Naive thymus-derived CD4-positive, alpha-beta T cell (primary cell): ENCODE measurements at regions of chr17 and their contacts with region 1.

Region 1: DNA sequence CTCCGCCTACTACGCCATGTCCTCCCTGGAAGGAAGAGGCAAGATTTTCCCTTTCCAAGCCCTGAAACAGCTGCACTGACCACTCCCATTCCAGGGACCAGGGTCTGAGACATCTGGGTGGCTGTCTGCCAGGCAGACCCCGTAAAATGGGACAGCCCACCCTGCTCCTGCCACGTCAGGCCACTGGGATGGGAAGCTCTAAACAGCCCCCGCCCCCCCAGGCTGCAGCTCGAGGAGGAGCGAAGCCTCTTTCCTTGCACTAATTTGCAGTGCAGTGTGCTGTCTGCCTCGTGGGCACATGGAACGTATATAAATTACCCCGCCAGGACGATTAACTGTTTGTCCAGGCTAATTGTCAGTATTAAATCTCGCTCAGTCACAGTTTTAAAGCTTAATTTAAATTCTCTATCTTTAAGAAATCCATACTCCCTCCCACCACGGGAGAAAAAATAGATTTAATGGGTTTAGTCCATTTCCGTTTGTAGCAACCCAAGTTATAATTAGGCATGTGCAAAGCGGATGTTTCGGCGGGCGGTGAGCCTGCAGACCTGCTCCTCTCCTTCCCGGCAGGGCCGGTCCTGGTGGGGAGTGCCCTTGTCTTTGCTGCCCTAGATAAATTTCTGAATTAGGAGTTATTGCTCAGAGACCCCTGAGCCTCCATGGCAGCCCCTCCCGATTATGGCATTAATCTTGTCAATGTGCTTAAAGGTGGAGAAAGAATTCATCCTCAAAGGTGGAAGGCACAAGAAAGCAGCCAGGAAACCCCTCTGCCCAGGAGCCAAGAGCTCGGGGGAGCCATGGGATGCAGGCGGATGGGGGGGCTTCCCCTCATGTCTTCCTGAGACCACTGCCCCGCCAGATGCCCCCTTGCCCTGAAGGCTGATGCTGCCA is 268.0 kb upstream of the TNRC6C start:
- DNase-seq: peak in 5 of 9 donors; percentile 12 to 28 (median 23)
- ATAC-seq: no peak
- H3K4me3 ChIP-seq: peak overlapping the region; percentile 7
- H3K4me3 Mint-ChIP-seq: peak overlapping the region; percentile 23 to 81 (median 72)
- H3K27ac ChIP-seq: peak overlapping the region; percentile 8
- H3K27ac Mint-ChIP-seq: peak overlapping the region in 3 of 9 donors; percentile 17 to 56 (median 39)
- H3K4me1 ChIP-seq: peaks cover 5 to 9% of the 10 kb centered on the region in 2 donors
- H3K4me1 Mint-ChIP-seq: peaks cover 11 to 27% (median 24%) of the 10 kb centered on the region in 7 donors
- H3K27me3 ChIP-seq: no peaks in the 10 kb centered on the region
- H3K27me3 Mint-ChIP-seq: peaks cover 0 to 20% (median 7%) of the 10 kb centered on the region in 5 donors

Region 2: DNA sequence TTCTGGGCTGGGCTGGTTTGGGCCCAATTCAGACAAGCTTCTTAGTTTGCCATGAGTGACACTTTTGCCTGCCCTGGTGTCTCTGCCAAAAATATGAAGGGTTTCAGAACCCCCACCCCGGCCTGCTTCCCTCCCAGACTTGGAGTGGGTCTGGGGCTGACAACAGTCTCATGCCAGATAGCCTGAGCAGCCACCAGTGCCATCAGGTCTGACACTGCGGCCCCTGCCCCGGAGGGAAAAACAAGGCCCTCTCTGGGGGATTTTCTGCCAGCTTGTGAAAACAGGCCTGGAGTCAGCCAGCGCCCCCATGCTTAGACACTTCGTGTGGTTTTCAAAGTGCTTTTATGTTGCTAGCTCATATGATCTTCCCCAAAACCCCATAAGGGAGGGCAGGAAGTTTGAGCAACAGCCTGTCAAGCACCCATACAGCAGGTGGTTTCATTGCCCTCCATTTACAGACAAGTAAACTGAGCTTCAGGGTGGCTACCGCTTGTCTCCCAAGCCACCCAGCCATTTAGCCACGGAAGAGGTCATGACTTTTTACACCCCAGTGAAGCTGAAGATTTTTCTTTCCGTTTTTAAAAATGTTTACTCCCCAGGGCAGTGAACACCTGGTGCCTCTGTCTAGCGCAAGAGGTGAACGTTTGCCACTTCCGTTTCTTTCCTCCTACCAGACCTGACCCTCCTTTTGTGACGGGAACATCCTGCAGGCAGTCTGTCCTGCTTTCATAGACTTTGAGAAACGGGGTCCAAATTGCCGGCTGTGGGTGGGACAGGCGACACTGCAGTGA is 249.2 kb before region 1 on chr17:
- CTCF ChIA-PET with region 1: no interaction called
- POLR2A ChIA-PET with region 1: no interaction called
- intact Hi-C with region 1: no loop called
- DNase-seq: peak in 8 of 9 donors; percentile 71 to 91 (median 90)
- ATAC-seq: peak; percentile 73
- H3K4me3 ChIP-seq: peak overlapping the region; percentile 44
- H3K4me3 Mint-ChIP-seq: peak overlapping the region; percentile 79 to 98 (median 88)
- H3K27ac ChIP-seq: peak overlapping the region; percentile 92
- H3K27ac Mint-ChIP-seq: peak overlapping the region; percentile 93 to 100 (median 99)
- H3K4me1 ChIP-seq: peaks cover 98 to 99% of the 10 kb centered on the region in 2 donors
- H3K4me1 Mint-ChIP-seq: peaks cover 83 to 100% (median 95%) of the 10 kb centered on the region in 7 donors
- H3K27me3 ChIP-seq: no peaks in the 10 kb centered on the region
- H3K27me3 Mint-ChIP-seq: no peaks in the 10 kb centered on the region

Region 3: GRCh38 chr17:77609553-77610517 is 80.7 kb before region 1 on chr17:
- CTCF ChIA-PET with region 1: no interaction called
- POLR2A ChIA-PET with region 1: interaction called, 9 read pairs
- intact Hi-C with region 1: loop called in 1 of 2 experiments (anchors 5 kb)
- DNase-seq: peak in 8 of 9 donors; percentile 30 to 86 (median 81)
- ATAC-seq: peak; percentile 95
- H3K4me3 ChIP-seq: peak overlapping the region; percentile 54
- H3K4me3 Mint-ChIP-seq: peak overlapping the region; percentile 75 to 92 (median 84)
- H3K27ac ChIP-seq: peak overlapping the region; percentile 77
- H3K27ac Mint-ChIP-seq: peak overlapping the region; percentile 87 to 98 (median 92)
- H3K4me1 ChIP-seq: peaks cover 11 to 21% of the 10 kb centered on the region in 2 donors
- H3K4me1 Mint-ChIP-seq: peaks cover 21 to 35% (median 31%) of the 10 kb centered on the region in 7 donors
- H3K27me3 ChIP-seq: no peaks in the 10 kb centered on the region
- H3K27me3 Mint-ChIP-seq: peaks cover 0 to 9% (median 0%) of the 10 kb centered on the region in 5 donors

Region 4: DNA sequence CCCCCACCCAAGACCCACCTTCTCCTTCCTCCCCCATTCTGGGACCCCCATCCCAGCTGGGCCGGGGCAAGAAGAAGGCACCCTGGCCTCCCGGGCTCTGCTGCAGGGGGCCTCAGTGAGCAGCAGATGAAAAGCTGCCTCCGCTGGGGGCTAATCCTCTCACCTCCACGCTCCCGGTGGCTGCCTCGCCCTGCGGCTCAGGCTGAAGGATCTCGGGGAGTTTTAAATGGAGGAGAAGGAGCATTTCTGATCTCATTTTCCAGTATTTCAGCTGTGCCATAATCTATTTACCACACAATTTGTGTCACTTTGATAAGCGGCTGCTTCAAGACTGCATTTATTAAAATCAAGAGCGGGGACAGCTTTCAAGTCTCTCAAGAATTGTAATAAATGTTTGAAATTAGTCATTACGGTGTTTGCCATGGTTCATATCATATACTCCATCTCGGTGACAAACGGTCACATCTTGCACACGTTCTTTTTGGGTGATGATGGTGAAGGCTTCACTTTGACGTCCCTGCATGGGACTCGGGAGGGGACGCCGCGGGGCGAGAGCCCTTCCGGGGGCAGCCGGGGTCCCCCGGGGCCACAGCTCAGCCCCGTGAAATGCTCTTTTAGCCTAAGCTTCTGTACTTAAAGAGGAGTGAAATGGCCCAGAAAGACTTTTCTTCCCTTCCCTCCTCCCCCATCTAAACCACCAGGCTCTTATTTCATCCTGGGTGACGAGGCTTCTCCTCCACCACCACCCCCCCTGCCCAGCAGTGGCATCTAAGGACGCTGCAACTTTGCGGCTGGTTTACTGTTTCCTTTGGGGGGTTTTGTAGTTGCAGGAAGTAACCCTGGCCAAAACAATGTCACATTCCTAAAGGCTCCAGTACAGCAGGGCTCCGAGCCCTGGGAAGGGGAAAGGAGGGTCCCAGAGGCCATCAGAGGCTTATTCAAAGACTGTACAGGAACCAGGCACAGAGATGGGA is 45.2 kb before region 1 on chr17:
- CTCF ChIA-PET with region 1: no interaction called
- POLR2A ChIA-PET with region 1: no interaction called
- intact Hi-C with region 1: no loop called
- DNase-seq: peak in 8 of 9 donors; percentile 45 to 74 (median 64)
- ATAC-seq: peak; percentile 84
- H3K4me3 ChIP-seq: peak overlapping the region; percentile 34
- H3K4me3 Mint-ChIP-seq: peak overlapping the region; percentile 63 to 81 (median 74)
- H3K27ac ChIP-seq: peak overlapping the region; percentile 55
- H3K27ac Mint-ChIP-seq: peak overlapping the region; percentile 84 to 94 (median 90)
- H3K4me1 ChIP-seq: peaks cover 13 to 21% of the 10 kb centered on the region in 2 donors
- H3K4me1 Mint-ChIP-seq: peaks cover 0 to 39% (median 31%) of the 10 kb centered on the region in 7 donors
- H3K27me3 ChIP-seq: no peaks in the 10 kb centered on the region
- H3K27me3 Mint-ChIP-seq: peaks cover 0 to 12% (median 0%) of the 10 kb centered on the region in 5 donors

Region 5: DNA sequence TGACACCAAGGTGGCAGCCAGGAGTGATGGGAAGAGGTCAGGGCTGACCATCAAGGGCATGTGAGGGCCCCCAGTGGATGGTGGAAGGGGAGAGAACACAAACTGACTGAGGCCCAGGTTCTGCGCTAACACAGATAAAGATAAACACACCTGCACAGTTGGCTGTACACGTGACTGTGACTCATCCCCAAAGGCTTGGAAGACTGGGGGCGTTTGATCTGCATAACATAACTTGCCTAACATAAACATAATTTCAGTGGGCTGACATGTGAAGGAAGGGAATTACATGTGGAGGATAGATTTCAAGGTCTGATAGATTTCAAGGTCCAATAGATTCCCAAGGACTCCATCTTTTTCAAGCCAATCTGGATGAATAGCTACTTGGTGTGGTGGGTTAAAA is 167.1 kb after region 1 on chr17:
- CTCF ChIA-PET with region 1: no interaction called
- POLR2A ChIA-PET with region 1: no interaction called
- intact Hi-C with region 1: no loop called
- DNase-seq: no peak
- ATAC-seq: no peak
- H3K4me3 ChIP-seq: no peak overlapping the region
- H3K4me3 Mint-ChIP-seq: no peak overlapping the region
- H3K27ac ChIP-seq: no peak overlapping the region
- H3K27ac Mint-ChIP-seq: peak overlapping the region in 2 of 9 donors; percentile 21 to 23
- H3K4me1 ChIP-seq: peaks cover 0 to 7% of the 10 kb centered on the region in 2 donors
- H3K4me1 Mint-ChIP-seq: peaks cover 8 to 34% (median 22%) of the 10 kb centered on the region in 7 donors
- H3K27me3 ChIP-seq: no peaks in the 10 kb centered on the region
- H3K27me3 Mint-ChIP-seq: peaks cover 0 to 22% (median 0%) of the 10 kb centered on the region in 5 donors

Region 6: GRCh38 chr17:77887464-77888241 is 197.1 kb after region 1 on chr17:
- CTCF ChIA-PET with region 1: no interaction called
- POLR2A ChIA-PET with region 1: no interaction called
- intact Hi-C with region 1: no loop called
- DNase-seq: peak; percentile 55 to 92 (median 84)
- ATAC-seq: peak; percentile 95
- H3K4me3 ChIP-seq: peak overlapping the region; percentile 80
- H3K4me3 Mint-ChIP-seq: peak overlapping the region; percentile 84 to 97 (median 92)
- H3K27ac ChIP-seq: peak overlapping the region; percentile 92
- H3K27ac Mint-ChIP-seq: peak overlapping the region; percentile 65 to 99 (median 98)
- H3K4me1 ChIP-seq: peaks cover 31 to 37% of the 10 kb centered on the region in 2 donors
- H3K4me1 Mint-ChIP-seq: peaks cover 20 to 62% (median 52%) of the 10 kb centered on the region in 7 donors
- H3K27me3 ChIP-seq: no peaks in the 10 kb centered on the region
- H3K27me3 Mint-ChIP-seq: peaks cover 0 to 58% (median 0%) of the 10 kb centered on the region in 5 donors